ENCODE measurements at regions of chr6 and their contacts with region 1.

Region 1: GRCh38 chr6:119612911-119613381 is 263.4 kb upstream of the MAN1A1 start:
- DNase-seq: no peak
- ATAC-seq: no peak
- H3K4me3 ChIP-seq: no peak overlapping the region
- H3K27ac ChIP-seq: no peak overlapping the region
- H3K4me1 ChIP-seq: no peaks in the 10 kb centered on the region
- H3K27me3 ChIP-seq: no peaks in the 10 kb centered on the region
- CTCF ChIP-seq: no peak
- POLR2A ChIP-seq: no peak

Region 2: DNA sequence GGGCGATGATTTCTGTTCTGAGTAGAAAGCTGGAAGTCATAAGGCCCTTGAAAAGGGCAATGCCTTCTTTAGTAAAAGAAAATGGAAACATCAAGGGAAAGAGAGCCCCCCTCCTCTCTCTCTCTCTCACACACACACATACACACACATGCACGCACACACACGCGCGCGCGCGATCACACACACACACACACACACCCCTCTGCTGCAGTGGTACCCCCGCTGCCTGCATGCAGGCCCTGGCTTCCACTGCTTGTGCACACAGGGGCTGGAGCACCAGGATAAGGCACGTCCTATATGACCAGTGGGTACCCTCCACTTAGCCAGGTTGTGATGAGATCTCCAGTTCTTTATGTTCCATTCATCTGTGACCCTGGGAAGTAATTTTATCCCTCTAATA is 1405.0 kb before region 1 on chr6:
- intact Hi-C with region 1: no loop called
- DNase-seq: no peak
- ATAC-seq: no peak
- H3K4me3 ChIP-seq: no peak overlapping the region
- H3K27ac ChIP-seq: no peak overlapping the region
- H3K4me1 ChIP-seq: no peaks in the 10 kb centered on the region
- H3K27me3 ChIP-seq: no peaks in the 10 kb centered on the region
- CTCF ChIP-seq: no peak
- POLR2A ChIP-seq: no peak

Region 3: DNA sequence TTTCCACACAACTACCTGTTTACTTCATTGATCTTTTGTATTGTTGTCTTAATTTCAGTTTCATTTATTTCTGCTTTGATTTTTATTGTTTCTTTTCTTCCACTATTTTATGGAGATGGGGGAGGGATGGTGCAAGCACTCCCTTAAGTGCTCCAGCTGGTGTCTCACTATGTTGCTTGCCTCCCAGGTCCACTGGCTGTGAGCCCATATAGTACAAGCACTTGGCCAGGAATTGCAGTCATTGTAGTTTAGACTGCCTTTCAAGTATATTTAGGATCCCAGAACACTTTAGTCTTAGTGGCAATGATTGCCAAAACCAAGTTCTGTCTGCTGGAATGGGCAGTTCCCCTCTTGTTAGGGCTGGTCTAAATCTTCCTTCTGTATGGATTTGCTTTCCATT is 228.5 kb before region 1 on chr6:
- intact Hi-C with region 1: loop called in 1 of 10 experiments (anchors 10 kb)
- DNase-seq: peak in 1 of 5 donors; percentile 47
- ATAC-seq: peak in 3 of 4 donors; percentile 57 to 90 (median 79)
- H3K4me3 ChIP-seq: no peak overlapping the region
- H3K27ac ChIP-seq: no peak overlapping the region
- H3K4me1 ChIP-seq: no peaks in the 10 kb centered on the region
- H3K27me3 ChIP-seq: no peaks in the 10 kb centered on the region
- CTCF ChIP-seq: no peak
- POLR2A ChIP-seq: no peak

Region 4: DNA sequence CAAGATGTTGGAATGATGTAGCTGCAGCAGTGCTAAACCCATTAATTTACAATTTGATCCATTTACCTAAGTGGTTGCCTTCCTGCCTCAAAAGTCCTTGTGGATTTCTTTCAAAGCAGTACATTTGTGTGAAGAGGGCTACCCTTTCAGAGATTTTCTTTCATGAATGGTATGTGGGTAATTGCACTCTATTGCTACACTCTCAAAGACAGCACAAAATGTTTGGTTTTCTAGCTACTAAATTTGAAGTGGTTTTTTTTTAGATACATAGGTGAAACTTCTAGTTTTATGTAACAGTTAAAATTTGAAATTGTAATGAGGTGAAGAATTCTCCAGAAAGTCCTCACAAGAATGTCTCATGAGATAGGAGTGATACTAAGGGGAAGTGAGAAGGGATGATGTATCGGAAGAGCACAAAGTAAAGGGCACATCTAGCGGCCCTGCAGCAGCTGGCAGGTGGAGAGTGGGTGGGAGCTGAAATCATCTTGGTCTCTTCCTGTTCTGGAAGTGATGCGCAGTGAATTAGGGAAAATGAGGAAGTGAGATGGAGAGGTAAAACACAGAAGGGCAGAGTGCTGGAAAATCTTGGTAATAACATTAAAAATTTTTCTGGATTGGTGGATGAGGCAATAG is 26.6 kb before region 1 on chr6:
- intact Hi-C with region 1: no loop called
- DNase-seq: no peak
- ATAC-seq: no peak
- H3K4me3 ChIP-seq: no peak overlapping the region
- H3K27ac ChIP-seq: no peak overlapping the region
- H3K4me1 ChIP-seq: no peaks in the 10 kb centered on the region
- H3K27me3 ChIP-seq: no peaks in the 10 kb centered on the region
- CTCF ChIP-seq: no peak
- POLR2A ChIP-seq: no peak

Measured in heart left ventricle (tissue), 16 donors.